ENCODE measurements at regions of chr1 and their contacts with region 1.

Region 1: DNA sequence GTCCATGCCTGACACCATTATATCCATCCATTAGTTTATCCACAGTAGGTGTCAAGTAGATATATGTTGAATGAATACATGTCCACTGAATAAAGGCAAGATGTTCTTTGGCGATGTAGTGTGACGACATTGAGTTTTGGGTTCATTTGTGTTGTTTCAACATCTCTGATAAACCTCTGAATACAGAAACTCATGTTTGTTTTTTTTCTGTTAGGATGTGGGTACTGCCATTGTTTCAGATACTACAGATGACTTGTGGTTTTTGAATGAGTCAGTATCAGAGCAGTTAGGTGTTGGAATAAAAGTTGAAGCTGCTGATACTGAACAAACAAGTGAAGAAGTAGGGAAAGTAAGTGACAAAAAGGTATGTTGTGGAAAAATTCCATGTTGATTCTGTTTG is 28.1 kb downstream of the MDM4 start:
- DNase-seq: peak in 3 of 14 experiments; percentile 70 to 84 (median 75)
- ATAC-seq: peak; percentile 94
- H3K4me3 ChIP-seq: no peak overlapping the region
- H3K4me3 Mint-ChIP-seq: peak overlapping the region; percentile 49
- H3K27ac ChIP-seq: peak overlapping the region; percentile 41 to 65
- H3K27ac Mint-ChIP-seq: peak overlapping the region; percentile 84
- H3K4me1 ChIP-seq: peaks cover 28% of the 10 kb centered on the region
- H3K4me1 Mint-ChIP-seq: peaks cover 63% of the 10 kb centered on the region
- H3K27me3 ChIP-seq: no peaks in the 10 kb centered on the region
- H3K27me3 Mint-ChIP-seq: no peaks in the 10 kb centered on the region
- CTCF ChIP-seq: no peak

Region 2: GRCh38 chr1:204480515-204480914 is 63.8 kb before region 1 on chr1:
- CTCF ChIA-PET with region 1: no interaction called
- POLR2A ChIA-PET with region 1: no interaction called
- intact Hi-C with region 1: no loop called
- DNase-seq: no peak
- ATAC-seq: peak; percentile 46
- H3K4me3 ChIP-seq: no peak overlapping the region
- H3K4me3 Mint-ChIP-seq: peak overlapping the region; percentile 2
- H3K27ac ChIP-seq: no peak overlapping the region
- H3K27ac Mint-ChIP-seq: peak overlapping the region; percentile 47
- H3K4me1 ChIP-seq: peaks cover 63% of the 10 kb centered on the region
- H3K4me1 Mint-ChIP-seq: peaks cover 79% of the 10 kb centered on the region
- H3K27me3 ChIP-seq: no peaks in the 10 kb centered on the region
- H3K27me3 Mint-ChIP-seq: no peaks in the 10 kb centered on the region
- CTCF ChIP-seq: no peak

Region 3: GRCh38 chr1:204523605-204524215 is 20.6 kb before region 1 on chr1:
- CTCF ChIA-PET with region 1: interaction called, 6 read pairs
- POLR2A ChIA-PET with region 1: interaction called, 83 read pairs
- intact Hi-C with region 1: loop called (anchors 2 kb)
- DNase-seq: peak in 1 of 14 experiments; percentile 44
- ATAC-seq: no peak
- H3K4me3 ChIP-seq: no peak overlapping the region
- H3K4me3 Mint-ChIP-seq: peak overlapping the region; percentile 54
- H3K27ac ChIP-seq: no peak overlapping the region
- H3K27ac Mint-ChIP-seq: peak overlapping the region; percentile 82
- H3K4me1 ChIP-seq: peaks cover 63% of the 10 kb centered on the region
- H3K4me1 Mint-ChIP-seq: peaks cover 65% of the 10 kb centered on the region
- H3K27me3 ChIP-seq: no peaks in the 10 kb centered on the region
- H3K27me3 Mint-ChIP-seq: no peaks in the 10 kb centered on the region
- CTCF ChIP-seq: no peak

Region 4: GRCh38 chr1:204565617-204566582 is 21.6 kb after region 1 on chr1:
- CTCF ChIA-PET with region 1: interaction called, 6 read pairs
- POLR2A ChIA-PET with region 1: interaction called, 10 read pairs
- intact Hi-C with region 1: loop called in 1 of 2 experiments (anchors 1 kb)
- DNase-seq: peak; percentile 24 to 85 (median 43)
- ATAC-seq: peak; percentile 87
- H3K4me3 ChIP-seq: no peak overlapping the region
- H3K4me3 Mint-ChIP-seq: no peak overlapping the region
- H3K27ac ChIP-seq: no peak overlapping the region
- H3K27ac Mint-ChIP-seq: peak overlapping the region; percentile 80
- H3K4me1 ChIP-seq: peaks cover 37% of the 10 kb centered on the region
- H3K4me1 Mint-ChIP-seq: peaks cover 54% of the 10 kb centered on the region
- H3K27me3 ChIP-seq: no peaks in the 10 kb centered on the region
- H3K27me3 Mint-ChIP-seq: no peaks in the 10 kb centered on the region
- CTCF ChIP-seq: peak; percentile 66

Region 5: GRCh38 chr1:204578867-204579664 is 34.7 kb after region 1 on chr1:
- CTCF ChIA-PET with region 1: no interaction called
- POLR2A ChIA-PET with region 1: no interaction called
- intact Hi-C with region 1: no loop called
- DNase-seq: peak in 4 of 14 experiments; percentile 24 to 49 (median 28)
- ATAC-seq: peak; percentile 55
- H3K4me3 ChIP-seq: peak overlapping the region; percentile 53
- H3K4me3 Mint-ChIP-seq: peak overlapping the region; percentile 86
- H3K27ac ChIP-seq: peak overlapping the region; percentile 25 to 69
- H3K27ac Mint-ChIP-seq: peak overlapping the region; percentile 88
- H3K4me1 ChIP-seq: peaks cover 28% of the 10 kb centered on the region
- H3K4me1 Mint-ChIP-seq: peaks cover 38% of the 10 kb centered on the region
- H3K27me3 ChIP-seq: no peaks in the 10 kb centered on the region
- H3K27me3 Mint-ChIP-seq: no peaks in the 10 kb centered on the region
- CTCF ChIP-seq: no peak